ENCODE measurements at regions of chr20 and their contacts with region 1.

Region 1: GRCh38 chr20:57391074-57391554 is at the start of gene RBM38:
- DNase-seq: peak; percentile 74
- H3K4me3 ChIP-seq: peak within 1 kb of the TSS; percentile 63 to 64
- H3K27ac ChIP-seq: peak within 1 kb of the TSS; percentile 70 to 77
- H3K4me1 ChIP-seq: peaks cover 50% of the 10 kb centered on the region
- H3K27me3 ChIP-seq: no peaks in the 10 kb centered on the region
- CTCF ChIP-seq: no peak
- POLR2A ChIP-seq: no peak
- total RNA-seq, gene RBM38: 108 to 114 TPM

Region 2: GRCh38 chr20:57440678-57441520 is 49.8 kb after region 1 on chr20:
- intact Hi-C with region 1: loop called (anchors 10 kb)
- DNase-seq: peak; percentile 84
- H3K4me3 ChIP-seq: no peak overlapping the region
- H3K27ac ChIP-seq: peak overlapping the region; percentile 73 to 77
- H3K4me1 ChIP-seq: peaks cover 23% of the 10 kb centered on the region
- H3K27me3 ChIP-seq: no peaks in the 10 kb centered on the region
- CTCF ChIP-seq: no peak
- POLR2A ChIP-seq: no peak